ENCODE measurements at regions of chr9 and their contacts with region 1.

Region 1: GRCh38 chr9:126722252-126723078 is 82.4 kb upstream of the ZBTB43 start:
- DNase-seq: peak; percentile 91
- ATAC-seq: peak; percentile 56
- H3K4me3 Mint-ChIP-seq: peak overlapping the region; percentile 84
- H3K27ac Mint-ChIP-seq: peak overlapping the region; percentile 98
- H3K4me1 Mint-ChIP-seq: peaks cover 46% of the 10 kb centered on the region
- H3K27me3 Mint-ChIP-seq: peaks cover 7% of the 10 kb centered on the region

Region 2: GRCh38 chr9:126733005-126733404 is 10.5 kb after region 1 on chr9:
- CTCF ChIA-PET with region 1: interaction called, 5 read pairs
- POLR2A ChIA-PET with region 1: interaction called, 15 read pairs
- DNase-seq: no peak
- ATAC-seq: no peak
- H3K4me3 Mint-ChIP-seq: no peak overlapping the region
- H3K27ac Mint-ChIP-seq: no peak overlapping the region
- H3K4me1 Mint-ChIP-seq: no peaks in the 10 kb centered on the region
- H3K27me3 Mint-ChIP-seq: peaks cover 8% of the 10 kb centered on the region

Region 3: DNA sequence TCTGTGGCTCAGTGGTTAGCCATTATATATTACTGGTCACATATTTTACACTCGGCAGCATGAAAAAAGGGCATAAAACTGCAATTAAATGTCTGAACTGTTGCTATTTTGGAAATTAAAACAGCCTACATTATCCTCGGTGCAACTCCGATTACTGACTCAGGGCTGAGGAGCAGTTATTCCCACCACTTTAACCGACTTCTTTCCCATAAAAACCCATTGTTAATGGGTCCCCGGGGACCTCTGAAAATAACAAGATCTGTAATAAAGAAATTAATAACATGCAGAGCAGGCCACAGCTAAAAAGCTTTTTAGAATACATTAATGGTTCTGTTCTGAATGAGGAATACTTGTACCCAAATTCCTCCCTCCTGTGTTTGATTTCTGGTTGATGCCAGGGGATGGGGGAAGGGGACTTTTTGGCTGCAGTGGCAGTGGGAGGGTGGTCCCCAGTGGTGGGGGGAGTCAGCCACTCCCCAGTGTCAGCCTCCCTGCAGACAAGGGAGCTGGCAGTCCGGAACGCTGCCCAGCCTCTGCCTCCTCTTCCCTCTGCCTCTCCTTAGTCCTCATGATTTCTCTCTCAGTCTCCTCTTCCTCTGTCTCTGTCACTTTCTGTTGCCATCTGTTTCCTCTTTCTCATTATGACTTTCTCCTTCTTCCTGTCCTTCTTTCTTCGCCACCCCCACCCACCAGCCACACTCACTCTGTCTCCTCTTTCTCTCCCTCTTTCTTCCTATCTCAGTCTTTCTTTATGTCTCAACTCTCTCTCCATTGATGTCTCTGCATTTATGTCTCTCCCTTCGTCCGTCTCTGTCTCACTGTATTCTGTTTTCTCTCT is 23.3 kb after region 1 on chr9:
- CTCF ChIA-PET with region 1: interaction called, 4 read pairs
- POLR2A ChIA-PET with region 1: interaction called, 23 read pairs
- DNase-seq: peak; percentile 35
- ATAC-seq: peak; percentile 24
- H3K4me3 Mint-ChIP-seq: peak overlapping the region; percentile 50
- H3K27ac Mint-ChIP-seq: peak overlapping the region; percentile 82
- H3K4me1 Mint-ChIP-seq: peaks cover 42% of the 10 kb centered on the region
- H3K27me3 Mint-ChIP-seq: peaks cover 1% of the 10 kb centered on the region

Region 4: GRCh38 chr9:126804696-126805545 is 82.5 kb after region 1 on chr9 and contains the start of gene ZBTB43:
- CTCF ChIA-PET with region 1: interaction called, 3 read pairs
- POLR2A ChIA-PET with region 1: interaction called, 12 read pairs
- DNase-seq: peak; percentile 99
- ATAC-seq: peak; percentile 87
- H3K4me3 Mint-ChIP-seq: peak within 1 kb of the TSS; percentile 83
- H3K27ac Mint-ChIP-seq: peak within 1 kb of the TSS; percentile 96
- H3K4me1 Mint-ChIP-seq: peaks cover 42% of the 10 kb centered on the region
- H3K27me3 Mint-ChIP-seq: no peaks in the 10 kb centered on the region
- total RNA-seq, gene ZBTB43: 13.6 to 19.1 TPM